ENCODE measurements at regions of chr2 and their contacts with region 1.

Region 1: DNA sequence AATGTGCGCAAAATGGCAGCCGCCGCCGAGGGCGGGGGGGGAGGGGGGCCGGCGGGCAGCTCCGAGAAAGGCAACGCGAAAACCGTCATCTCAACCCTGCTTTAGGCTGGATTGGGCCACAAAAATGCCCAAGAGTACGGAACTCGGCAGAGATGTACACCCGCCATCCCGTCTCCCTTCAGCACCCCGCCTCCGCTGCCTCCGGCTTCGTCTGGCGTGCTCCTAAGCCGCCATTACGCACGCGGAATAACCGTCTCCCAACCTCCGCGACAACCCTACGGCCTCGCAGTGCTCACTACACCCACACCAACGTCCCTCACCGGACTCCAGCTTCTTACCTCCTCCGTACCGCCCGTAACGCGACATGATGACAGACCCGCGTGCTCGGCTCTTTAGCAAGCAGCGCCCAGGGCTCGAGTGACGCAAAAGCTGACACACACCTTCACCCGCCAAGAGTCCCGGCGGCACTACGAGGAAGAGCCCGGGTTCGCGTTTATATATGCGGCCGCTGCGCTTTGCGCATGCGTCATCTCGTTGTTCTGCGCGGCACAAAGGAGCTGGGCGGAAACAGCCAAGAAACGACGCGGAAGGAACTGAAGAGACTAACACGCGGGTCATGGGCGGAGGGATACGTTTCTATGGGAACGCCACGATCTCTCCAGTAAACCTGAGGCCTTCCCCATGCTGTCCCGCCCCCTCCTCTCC is at the start of gene SRSF7:
- DNase-seq: peak; percentile 94 to 99 (median 97)
- ATAC-seq: peak; percentile 78 to 87 (median 82)
- H3K4me3 ChIP-seq: peak within 1 kb of the TSS; percentile 89 to 95
- H3K4me3 Mint-ChIP-seq: peak within 1 kb of the TSS; percentile 99 to 100 (median 100)
- H3K27ac ChIP-seq: peak within 1 kb of the TSS; percentile 96
- H3K27ac Mint-ChIP-seq: peak within 1 kb of the TSS; percentile 99 to 100
- H3K4me1 ChIP-seq: peaks cover 36 to 46% of the 10 kb centered on the region in 2 experiments
- H3K4me1 Mint-ChIP-seq: peaks cover 52 to 66% (median 62%) of the 10 kb centered on the region in 3 donors
- H3K27me3 ChIP-seq: no peaks in the 10 kb centered on the region
- H3K27me3 Mint-ChIP-seq: peaks cover 0 to 3% of the 10 kb centered on the region in 2 donors
- total RNA-seq, gene SRSF7: 252 to 649 (median 265) TPM

Region 2: GRCh38 chr2:37231241-37232130 is 1519.6 kb before region 1 on chr2 and contains the starts of genes CEBPZ and NDUFAF7:
- CTCF ChIA-PET with region 1: no interaction called
- POLR2A ChIA-PET with region 1: interaction called in 1 of 2 experiments, 12 read pairs
- DNase-seq: peak; percentile 74 to 92 (median 85)
- ATAC-seq: peak; percentile 93 to 94 (median 94)
- H3K4me3 ChIP-seq: peak within 1 kb of the TSS; percentile 76 to 93
- H3K4me3 Mint-ChIP-seq: no peak within 1 kb of the TSS
- H3K27ac ChIP-seq: peak within 1 kb of the TSS; percentile 89
- H3K27ac Mint-ChIP-seq: no peak within 1 kb of the TSS
- H3K4me1 ChIP-seq: peaks cover 23 to 27% of the 10 kb centered on the region in 2 experiments
- H3K4me1 Mint-ChIP-seq: peaks cover 34 to 48% (median 40%) of the 10 kb centered on the region in 3 donors
- H3K27me3 ChIP-seq: no peaks in the 10 kb centered on the region
- H3K27me3 Mint-ChIP-seq: no peaks in the 10 kb centered on the region
- total RNA-seq, gene CEBPZ: 50.6 to 61.5 (median 58.1) TPM
- total RNA-seq, gene NDUFAF7: 20.2 to 30.3 (median 24.6) TPM

Region 3: GRCh38 chr2:38665854-38666555 is 85.0 kb before region 1 on chr2 and contains the start of gene GALM:
- CTCF ChIA-PET with region 1: interaction called in 1 of 2 experiments, 4 read pairs
- POLR2A ChIA-PET with region 1: interaction called, 7 to 18 read pairs
- DNase-seq: peak in 28 of 35 experiments; percentile 10 to 69 (median 33)
- ATAC-seq: peak; percentile 35 to 49 (median 46)
- H3K4me3 ChIP-seq: peak within 1 kb of the TSS; percentile 70 to 95
- H3K4me3 Mint-ChIP-seq: peak within 1 kb of the TSS; percentile 85 to 91 (median 90)
- H3K27ac ChIP-seq: peak within 1 kb of the TSS; percentile 79
- H3K27ac Mint-ChIP-seq: peak within 1 kb of the TSS; percentile 97 to 99
- H3K4me1 ChIP-seq: peaks cover 13 to 54% of the 10 kb centered on the region in 2 experiments
- H3K4me1 Mint-ChIP-seq: peaks cover 43 to 68% (median 55%) of the 10 kb centered on the region in 3 donors
- H3K27me3 ChIP-seq: no peaks in the 10 kb centered on the region
- H3K27me3 Mint-ChIP-seq: no peaks in the 10 kb centered on the region
- total RNA-seq, gene GALM: 14.3 to 29.4 (median 17.3) TPM

Region 4: GRCh38 chr2:38709567-38710194 is 41.4 kb before region 1 on chr2:
- CTCF ChIA-PET with region 1: interaction called in 1 of 2 experiments, 3 read pairs
- POLR2A ChIA-PET with region 1: interaction called, 7 to 25 read pairs
- DNase-seq: peak in 24 of 35 experiments; percentile 8 to 78 (median 31)
- ATAC-seq: peak; percentile 67 to 86 (median 72)
- H3K4me3 ChIP-seq: peak overlapping the region in 1 of 2 donors; percentile 32
- H3K4me3 Mint-ChIP-seq: peak overlapping the region; percentile 34 to 62 (median 54)
- H3K27ac ChIP-seq: peak overlapping the region; percentile 78
- H3K27ac Mint-ChIP-seq: peak overlapping the region; percentile 94 to 96
- H3K4me1 ChIP-seq: peaks cover 17 to 47% of the 10 kb centered on the region in 2 experiments
- H3K4me1 Mint-ChIP-seq: peaks cover 53 to 77% (median 62%) of the 10 kb centered on the region in 3 donors
- H3K27me3 ChIP-seq: no peaks in the 10 kb centered on the region
- H3K27me3 Mint-ChIP-seq: no peaks in the 10 kb centered on the region

Region 5: GRCh38 chr2:38763228-38763627 is 12.2 kb after region 1 on chr2:
- CTCF ChIA-PET with region 1: interaction called in 1 of 2 experiments, 3 read pairs
- POLR2A ChIA-PET with region 1: interaction called, 7 to 18 read pairs
- DNase-seq: no peak
- ATAC-seq: peak in 1 of 4 experiments; percentile 69
- H3K4me3 ChIP-seq: no peak overlapping the region
- H3K4me3 Mint-ChIP-seq: no peak overlapping the region
- H3K27ac ChIP-seq: no peak overlapping the region
- H3K27ac Mint-ChIP-seq: no peak overlapping the region
- H3K4me1 ChIP-seq: no peaks in the 10 kb centered on the region
- H3K4me1 Mint-ChIP-seq: no peaks in the 10 kb centered on the region
- H3K27me3 ChIP-seq: no peaks in the 10 kb centered on the region
- H3K27me3 Mint-ChIP-seq: no peaks in the 10 kb centered on the region

Region 6: GRCh38 chr2:38875576-38876367 is 124.7 kb after region 1 on chr2 and contains the starts of genes DHX57 and MORN2:
- CTCF ChIA-PET with region 1: no interaction called
- POLR2A ChIA-PET with region 1: interaction called, 4 to 13 read pairs
- DNase-seq: peak; percentile 58 to 89 (median 76)
- ATAC-seq: peak; percentile 97 to 99 (median 98)
- H3K4me3 ChIP-seq: peak within 1 kb of the TSS; percentile 79 to 88
- H3K4me3 Mint-ChIP-seq: peak within 1 kb of the TSS; percentile 95 to 99 (median 95)
- H3K27ac ChIP-seq: peak within 1 kb of the TSS; percentile 49
- H3K27ac Mint-ChIP-seq: peak within 1 kb of the TSS; percentile 82 to 88
- H3K4me1 ChIP-seq: peaks cover 7 to 10% of the 10 kb centered on the region in 2 experiments
- H3K4me1 Mint-ChIP-seq: peaks cover 25 to 43% (median 40%) of the 10 kb centered on the region in 3 donors
- H3K27me3 ChIP-seq: no peaks in the 10 kb centered on the region
- H3K27me3 Mint-ChIP-seq: no peaks in the 10 kb centered on the region
- total RNA-seq, gene DHX57: 14.2 to 20.5 (median 16.0) TPM
- total RNA-seq, gene MORN2: 1.1 to 2.1 (median 1.5) TPM